Right cardiac atrium (tissue), 5 donors: ENCODE measurements at regions of chr12 and their contacts with region 1.

Region 1: GRCh38 chr12:57175428-57176138 is 28.2 kb upstream of the LRP1-AS start:
- DNase-seq: peak; percentile 86 to 94 (median 93)
- ATAC-seq: peak; percentile 42 to 49
- H3K4me3 ChIP-seq: no peak overlapping the region
- H3K27ac ChIP-seq: no peak overlapping the region
- H3K4me1 ChIP-seq: no peaks in the 10 kb centered on the region
- H3K27me3 ChIP-seq: no peaks in the 10 kb centered on the region

Region 2: GRCh38 chr12:57078519-57079404 is 96.8 kb before region 1 on chr12 and contains the start of gene NEMP1:
- intact Hi-C with region 1: loop called in 1 of 4 experiments (anchors 10 kb)
- DNase-seq: peak; percentile 95 to 97 (median 97)
- ATAC-seq: peak; percentile 100
- H3K4me3 ChIP-seq: peak within 1 kb of the TSS; percentile 62
- H3K27ac ChIP-seq: peak within 1 kb of the TSS; percentile 53
- H3K4me1 ChIP-seq: no peaks in the 10 kb centered on the region
- H3K27me3 ChIP-seq: no peaks in the 10 kb centered on the region
- total RNA-seq, gene NEMP1: 4.4 to 6.1 (median 5.1) TPM

Region 3: GRCh38 chr12:57124259-57124877 is 51.2 kb before region 1 on chr12:
- intact Hi-C with region 1: loop called in 2 of 4 experiments (anchors 2 to 5 kb)
- DNase-seq: peak; percentile 56 to 83 (median 69)
- ATAC-seq: peak in 1 of 2 donors; percentile 42
- H3K4me3 ChIP-seq: no peak overlapping the region
- H3K27ac ChIP-seq: no peak overlapping the region
- H3K4me1 ChIP-seq: no peaks in the 10 kb centered on the region
- H3K27me3 ChIP-seq: no peaks in the 10 kb centered on the region

Region 4: GRCh38 chr12:57524777-57525614 is 349.4 kb after region 1 on chr12:
- intact Hi-C with region 1: no loop called
- DNase-seq: peak in 1 of 3 donors; percentile 71
- ATAC-seq: no peak
- H3K4me3 ChIP-seq: no peak overlapping the region
- H3K27ac ChIP-seq: no peak overlapping the region
- H3K4me1 ChIP-seq: peaks cover 10% of the 10 kb centered on the region
- H3K27me3 ChIP-seq: no peaks in the 10 kb centered on the region